GM12878 (cell line): ENCODE measurements at regions of chr1 and their contacts with region 1.

Region 1: DNA sequence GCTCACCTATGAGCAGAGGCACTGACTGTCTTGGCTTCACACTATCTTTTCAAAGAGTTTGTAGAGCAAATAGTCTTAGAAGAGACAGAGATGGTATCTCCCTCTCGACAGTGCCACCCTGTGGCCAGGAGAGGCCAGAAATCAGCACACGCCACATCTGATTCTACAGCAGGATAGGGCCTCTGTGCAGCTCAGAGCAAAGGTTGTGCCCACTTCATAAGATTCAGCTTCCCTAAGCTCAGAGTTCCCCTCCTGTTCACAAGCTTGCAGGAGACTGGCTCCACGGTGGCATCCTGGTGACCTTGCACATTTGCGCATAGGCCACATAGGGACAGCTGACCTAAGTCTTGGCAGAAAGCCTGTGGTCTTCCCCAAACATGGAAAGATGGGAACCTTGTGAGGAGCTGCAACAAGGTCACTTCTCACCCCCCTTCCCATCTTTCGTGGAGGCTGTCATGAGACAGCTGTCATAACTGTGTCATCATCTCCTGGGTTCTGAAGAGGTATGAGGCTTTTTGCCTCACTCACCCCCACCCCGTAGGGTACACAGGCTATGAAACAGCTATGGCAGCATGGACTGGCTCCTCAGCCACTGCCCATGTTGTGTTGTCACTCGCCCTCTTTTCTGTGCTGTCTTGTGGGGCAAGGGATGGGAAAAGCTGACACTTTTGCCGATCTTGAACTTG is 3.0 kb downstream of the ITLN2 start:
- DNase-seq: peak; percentile 40
- ATAC-seq: peak; percentile 95
- H3K4me3 ChIP-seq: no peak overlapping the region
- H3K27ac ChIP-seq: no peak overlapping the region
- H3K4me1 ChIP-seq: no peaks in the 10 kb centered on the region
- H3K27me3 ChIP-seq: no peaks in the 10 kb centered on the region
- CTCF ChIP-seq: peak; percentile 80 to 90 (median 89)
- EP300 ChIP-seq: no peak
- POLR2A ChIP-seq: no peak
- RAD21 ChIP-seq: peak; percentile 89

Region 2: DNA sequence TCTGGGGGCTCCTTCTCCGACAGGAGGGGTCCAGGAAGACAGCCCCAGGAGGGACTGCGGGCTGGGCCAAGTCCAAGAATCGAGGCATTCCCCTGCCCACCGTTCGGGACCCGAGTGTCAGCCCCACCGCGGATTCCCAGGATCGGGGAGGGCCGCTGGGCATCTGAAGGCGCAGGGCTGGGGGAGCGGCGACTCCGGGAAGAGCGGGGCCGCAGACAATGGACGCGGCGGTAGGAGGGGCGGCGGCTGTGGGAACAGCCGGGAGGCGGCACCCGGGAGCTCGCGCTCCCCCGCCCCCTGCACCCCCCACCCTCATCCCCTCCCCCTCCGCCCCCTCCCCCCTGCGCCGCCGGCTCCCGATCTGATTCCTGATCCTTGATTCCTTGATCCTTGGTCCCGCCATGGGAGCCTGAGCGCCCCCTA is 551.4 kb before region 1 on chr1 and contains the start of gene VANGL2:
- CTCF ChIA-PET with region 1: no interaction called
- POLR2A ChIA-PET with region 1: no interaction called
- RAD21 ChIA-PET with region 1: no interaction called
- SMC1A ChIA-PET with region 1: no interaction called
- in situ Hi-C with region 1: loop called (anchors 25 kb)
- intact Hi-C with region 1: no loop called
- DNase-seq: no peak
- ATAC-seq: peak; percentile 41
- H3K4me3 ChIP-seq: peak within 1 kb of the TSS; percentile 63
- H3K27ac ChIP-seq: no peak within 1 kb of the TSS
- H3K4me1 ChIP-seq: no peaks in the 10 kb centered on the region
- H3K27me3 ChIP-seq: peaks cover 0 to 4% of the 10 kb centered on the region in 2 experiments; a peak in 2 of 4 replicates
- CTCF ChIP-seq: no peak
- EP300 ChIP-seq: peak in 1 of 2 experiments; percentile 100; a peak in 2 of 4 replicates
- POLR2A ChIP-seq: no peak
- RAD21 ChIP-seq: no peak
- polyA plus RNA-seq, gene VANGL2: 0.10 to 0.13 TPM

Region 3: DNA sequence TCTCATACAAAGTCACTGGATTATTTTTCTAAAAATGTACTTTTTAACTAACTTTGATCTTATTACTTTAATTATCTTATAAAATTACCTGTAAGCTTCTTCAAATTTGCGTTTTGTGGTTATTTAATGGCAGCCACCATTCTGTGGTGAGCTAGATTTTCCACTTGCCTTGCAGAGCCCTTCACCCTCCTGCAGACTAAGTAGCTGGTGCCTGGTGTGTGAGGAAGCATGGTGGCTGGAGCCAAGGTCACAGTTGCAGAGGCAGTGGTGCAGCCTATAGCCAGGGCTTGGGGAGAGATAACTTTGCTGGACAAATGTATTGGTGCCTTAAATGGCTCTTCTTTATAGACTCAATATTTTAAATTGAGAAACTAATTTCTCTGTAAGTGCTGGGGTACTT is 361.1 kb before region 1 on chr1:
- CTCF ChIA-PET with region 1: no interaction called
- POLR2A ChIA-PET with region 1: no interaction called
- RAD21 ChIA-PET with region 1: no interaction called
- SMC1A ChIA-PET with region 1: no interaction called
- in situ Hi-C with region 1: no loop called
- intact Hi-C with region 1: no loop called
- DNase-seq: no peak
- ATAC-seq: no peak
- H3K4me3 ChIP-seq: no peak overlapping the region
- H3K27ac ChIP-seq: no peak overlapping the region
- H3K4me1 ChIP-seq: no peaks in the 10 kb centered on the region
- H3K27me3 ChIP-seq: no peaks in the 10 kb centered on the region
- CTCF ChIP-seq: no peak
- EP300 ChIP-seq: no peak
- POLR2A ChIP-seq: no peak
- RAD21 ChIP-seq: no peak

Region 4: GRCh38 chr1:160726498-160727315 is 224.9 kb before region 1 on chr1:
- CTCF ChIA-PET with region 1: interaction called, 96 read pairs
- POLR2A ChIA-PET with region 1: interaction called, 4 read pairs
- RAD21 ChIA-PET with region 1: interaction called, 66 read pairs
- SMC1A ChIA-PET with region 1: interaction called, 71 read pairs
- in situ Hi-C with region 1: loop called (anchors 5 kb)
- intact Hi-C with region 1: loop called (anchors 1 kb)
- DNase-seq: no peak
- ATAC-seq: peak; percentile 80
- H3K4me3 ChIP-seq: no peak overlapping the region
- H3K27ac ChIP-seq: peak overlapping the region; percentile 85
- H3K4me1 ChIP-seq: peaks cover 40% of the 10 kb centered on the region
- H3K27me3 ChIP-seq: no peaks in the 10 kb centered on the region
- CTCF ChIP-seq: peak; percentile 81 to 92 (median 91); a peak in 5 of 6 replicates
- EP300 ChIP-seq: no peak
- POLR2A ChIP-seq: no peak
- RAD21 ChIP-seq: peak; percentile 99

Region 5: DNA sequence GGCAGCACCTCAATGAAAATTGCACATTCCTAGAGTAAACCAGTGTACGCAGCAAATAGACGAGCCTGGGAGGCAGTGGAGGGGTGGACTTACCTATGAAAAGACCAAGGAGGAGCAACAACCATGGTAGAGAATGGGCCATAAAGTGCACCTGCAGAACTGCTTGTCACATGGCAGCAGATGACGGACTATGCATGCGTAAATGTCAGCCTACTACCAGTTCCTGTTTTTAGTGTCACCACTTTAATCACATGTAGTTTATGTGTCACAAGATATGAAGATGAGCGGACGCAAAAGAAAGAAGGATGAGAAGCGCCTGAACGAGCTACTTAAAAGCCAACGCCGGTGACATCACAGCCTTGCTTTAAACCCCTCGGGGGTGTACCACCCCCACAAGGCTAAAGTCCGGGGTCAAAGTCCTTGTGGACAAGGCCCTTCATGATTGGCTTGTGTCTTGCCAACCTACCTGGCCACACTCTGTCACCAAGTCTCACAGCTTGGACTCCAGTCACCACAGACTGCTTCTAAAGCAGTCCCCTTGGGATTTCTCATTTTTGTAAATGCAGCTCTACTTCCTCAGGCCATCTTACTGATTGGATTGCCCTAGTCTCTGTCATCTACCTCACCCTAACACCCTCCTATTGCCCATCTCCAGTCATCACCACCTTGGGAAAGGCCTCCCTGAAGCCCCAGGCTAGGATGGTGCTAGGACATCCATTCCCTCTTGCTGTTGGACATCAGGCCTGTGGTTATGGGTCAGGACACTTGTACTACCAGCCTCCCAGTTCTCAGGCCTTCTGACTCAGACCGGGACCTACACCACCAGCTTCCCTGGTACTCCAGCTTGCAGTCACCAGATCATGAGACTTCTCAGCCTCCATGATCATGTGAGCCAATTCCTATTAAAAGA is 161.6 kb before region 1 on chr1:
- CTCF ChIA-PET with region 1: interaction called, 14 read pairs
- POLR2A ChIA-PET with region 1: no interaction called
- RAD21 ChIA-PET with region 1: interaction called, 24 read pairs
- SMC1A ChIA-PET with region 1: interaction called, 4 read pairs
- in situ Hi-C with region 1: no loop called
- intact Hi-C with region 1: no loop called
- DNase-seq: peak; percentile 89
- ATAC-seq: peak; percentile 91
- H3K4me3 ChIP-seq: no peak overlapping the region; the same call in 1 of the 2 replicates
- H3K27ac ChIP-seq: peak overlapping the region; percentile 86
- H3K4me1 ChIP-seq: peaks cover 19% of the 10 kb centered on the region
- H3K27me3 ChIP-seq: no peaks in the 10 kb centered on the region
- CTCF ChIP-seq: no peak
- EP300 ChIP-seq: peak; percentile 96 to 99
- POLR2A ChIP-seq: no peak
- RAD21 ChIP-seq: no peak

Region 6: GRCh38 chr1:160844447-160845232 is 106.9 kb before region 1 on chr1:
- CTCF ChIA-PET with region 1: interaction called, 349 read pairs
- POLR2A ChIA-PET with region 1: no interaction called
- RAD21 ChIA-PET with region 1: interaction called, 11 read pairs
- SMC1A ChIA-PET with region 1: interaction called, 19 read pairs
- in situ Hi-C with region 1: loop called (anchors 5 kb)
- intact Hi-C with region 1: no loop called
- DNase-seq: no peak
- ATAC-seq: no peak; the same call in 2 of the 3 replicates
- H3K4me3 ChIP-seq: no peak overlapping the region
- H3K27ac ChIP-seq: no peak overlapping the region
- H3K4me1 ChIP-seq: no peaks in the 10 kb centered on the region
- H3K27me3 ChIP-seq: no peaks in the 10 kb centered on the region
- CTCF ChIP-seq: no peak
- EP300 ChIP-seq: no peak
- POLR2A ChIP-seq: no peak
- RAD21 ChIP-seq: no peak

Region 7: GRCh38 chr1:160877221-160877620 is 74.4 kb before region 1 on chr1:
- CTCF ChIA-PET with region 1: interaction called, 56 read pairs
- POLR2A ChIA-PET with region 1: no interaction called
- RAD21 ChIA-PET with region 1: interaction called, 5 read pairs
- SMC1A ChIA-PET with region 1: interaction called, 8 read pairs
- in situ Hi-C with region 1: no loop called
- intact Hi-C with region 1: no loop called
- DNase-seq: no peak
- ATAC-seq: peak; percentile 75
- H3K4me3 ChIP-seq: no peak overlapping the region
- H3K27ac ChIP-seq: no peak overlapping the region
- H3K4me1 ChIP-seq: no peaks in the 10 kb centered on the region
- H3K27me3 ChIP-seq: no peaks in the 10 kb centered on the region
- CTCF ChIP-seq: peak; percentile 32 to 37 (median 37); a peak in 5 of 6 replicates
- EP300 ChIP-seq: no peak
- POLR2A ChIP-seq: no peak
- RAD21 ChIP-seq: peak; percentile 47

Region 8: DNA sequence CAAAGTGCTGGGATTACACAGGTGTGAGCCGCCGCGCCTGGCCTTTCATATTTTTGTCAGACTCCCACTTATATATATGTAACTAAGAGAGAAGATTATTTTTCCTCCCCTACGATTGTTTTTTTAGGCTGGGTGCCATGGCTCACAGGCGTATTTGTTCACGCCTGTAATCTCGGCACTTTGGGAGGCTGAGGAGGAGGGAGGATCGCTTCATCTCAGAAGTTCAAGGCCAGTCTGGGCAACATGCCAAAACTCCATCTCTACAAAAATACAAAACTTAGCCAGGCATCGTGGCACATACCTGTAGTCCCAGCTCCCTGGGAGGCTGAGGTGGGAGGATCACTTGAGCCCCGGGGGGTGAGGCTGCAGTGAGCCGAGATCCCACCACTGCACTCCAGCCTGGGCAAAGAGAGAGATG is 26.9 kb after region 1 on chr1:
- CTCF ChIA-PET with region 1: interaction called, 94 read pairs
- POLR2A ChIA-PET with region 1: interaction called, 3 read pairs
- RAD21 ChIA-PET with region 1: interaction called, 5 read pairs
- SMC1A ChIA-PET with region 1: interaction called, 21 read pairs
- in situ Hi-C with region 1: no loop called
- intact Hi-C with region 1: no loop called
- DNase-seq: no peak
- ATAC-seq: no peak
- H3K4me3 ChIP-seq: no peak overlapping the region
- H3K27ac ChIP-seq: no peak overlapping the region
- H3K4me1 ChIP-seq: peaks cover 10% of the 10 kb centered on the region
- H3K27me3 ChIP-seq: no peaks in the 10 kb centered on the region; a peak in 2 of 4 replicates
- CTCF ChIP-seq: no peak
- EP300 ChIP-seq: no peak
- POLR2A ChIP-seq: no peak
- RAD21 ChIP-seq: no peak

Region 9: GRCh38 chr1:161165742-161166668 is 214.4 kb after region 1 on chr1 and contains the start of gene PPOX:
- CTCF ChIA-PET with region 1: no interaction called
- POLR2A ChIA-PET with region 1: no interaction called
- RAD21 ChIA-PET with region 1: no interaction called
- SMC1A ChIA-PET with region 1: no interaction called
- in situ Hi-C with region 1: no loop called
- intact Hi-C with region 1: no loop called
- DNase-seq: peak; percentile 92
- ATAC-seq: peak; percentile 97
- H3K4me3 ChIP-seq: peak within 1 kb of the TSS; percentile 86
- H3K27ac ChIP-seq: peak within 1 kb of the TSS; percentile 54
- H3K4me1 ChIP-seq: peaks cover 8% of the 10 kb centered on the region
- H3K27me3 ChIP-seq: no peaks in the 10 kb centered on the region
- CTCF ChIP-seq: peak; percentile 50 to 67 (median 61)
- EP300 ChIP-seq: no peak; a peak in 1 of 4 replicates
- POLR2A ChIP-seq: peak; percentile 88
- RAD21 ChIP-seq: peak; percentile 26; the same call in 1 of the 2 replicates
- polyA plus RNA-seq, gene PPOX: 8.9 to 16.3 TPM